Mammary epithelial cell (primary cell): ENCODE measurements at regions of chr1 and their contacts with region 1.

Region 1: DNA sequence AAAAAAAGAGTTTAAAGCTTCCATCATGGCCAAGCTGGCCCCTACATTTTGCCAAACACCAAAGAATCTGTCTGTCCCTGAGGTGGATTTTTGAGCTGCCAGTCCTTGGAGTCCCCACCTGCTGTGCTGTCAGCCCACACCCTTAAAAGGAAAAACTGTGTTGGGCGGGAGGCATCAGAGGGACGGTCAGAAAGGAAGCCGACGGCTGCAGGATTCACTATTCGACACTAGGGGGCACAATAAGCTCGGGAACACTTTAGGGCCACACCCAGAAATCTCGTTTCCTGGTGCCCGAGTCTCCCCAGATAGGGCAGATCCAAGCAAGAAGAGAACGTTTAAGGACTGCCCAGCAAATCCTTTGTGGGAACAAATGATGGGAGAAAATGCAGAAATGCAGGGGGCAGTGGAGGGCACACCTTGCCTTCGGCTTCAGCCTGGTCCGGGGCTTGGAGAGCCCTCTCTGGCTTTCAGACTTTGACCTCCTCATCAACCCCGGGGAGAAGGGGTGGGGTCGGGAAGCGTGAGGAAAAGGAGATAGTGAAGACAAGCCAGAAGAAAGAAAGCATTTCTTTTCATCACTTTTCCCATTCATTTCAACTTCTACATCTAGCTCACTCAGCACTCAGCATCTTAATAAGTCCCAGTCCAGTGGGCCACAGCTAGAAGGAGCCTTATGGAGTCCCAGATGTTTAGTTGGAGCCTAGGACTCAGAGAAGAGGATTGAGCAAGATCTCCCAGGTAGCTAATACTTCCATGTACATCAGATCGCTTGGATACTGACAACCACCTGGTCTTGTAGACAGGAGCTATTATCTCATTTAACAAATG is 5.0 kb upstream of the CTTNBP2NL start:
- DNase-seq: peak; percentile 88
- H3K4me3 ChIP-seq: peak overlapping the region; percentile 38 to 50 (median 41)
- H3K27ac ChIP-seq: peak overlapping the region; percentile 52
- H3K4me1 ChIP-seq: peaks cover 39% of the 10 kb centered on the region
- H3K27me3 ChIP-seq: no peaks in the 10 kb centered on the region
- CTCF ChIP-seq: peak; percentile 90 to 93

Region 2: GRCh38 chr1:112209488-112209887 is 181.5 kb before region 1 on chr1:
- CTCF ChIA-PET with region 1: no interaction called
- dilution Hi-C with region 1: no loop called
- in situ Hi-C with region 1: no loop called
- intact Hi-C with region 1: no loop called
- DNase-seq: peak; percentile 11
- H3K4me3 ChIP-seq: no peak overlapping the region
- H3K27ac ChIP-seq: no peak overlapping the region
- H3K4me1 ChIP-seq: no peaks in the 10 kb centered on the region
- H3K27me3 ChIP-seq: no peaks in the 10 kb centered on the region
- CTCF ChIP-seq: no peak

Region 3: GRCh38 chr1:112298558-112298957 is 92.4 kb before region 1 on chr1:
- CTCF ChIA-PET with region 1: interaction called, 14 read pairs
- dilution Hi-C with region 1: no loop called
- in situ Hi-C with region 1: no loop called
- intact Hi-C with region 1: no loop called
- DNase-seq: peak; percentile 58
- H3K4me3 ChIP-seq: no peak overlapping the region
- H3K27ac ChIP-seq: no peak overlapping the region
- H3K4me1 ChIP-seq: peaks cover 10% of the 10 kb centered on the region
- H3K27me3 ChIP-seq: no peaks in the 10 kb centered on the region
- CTCF ChIP-seq: peak; percentile 86 to 89

Region 4: GRCh38 chr1:112358798-112359408 is 32.1 kb before region 1 on chr1:
- CTCF ChIA-PET with region 1: interaction called, 19 read pairs
- dilution Hi-C with region 1: no loop called
- in situ Hi-C with region 1: no loop called
- intact Hi-C with region 1: no loop called
- DNase-seq: peak; percentile 59
- H3K4me3 ChIP-seq: no peak overlapping the region
- H3K27ac ChIP-seq: no peak overlapping the region
- H3K4me1 ChIP-seq: peaks cover 21% of the 10 kb centered on the region
- H3K27me3 ChIP-seq: no peaks in the 10 kb centered on the region
- CTCF ChIP-seq: peak; percentile 87 to 92

Region 5: GRCh38 chr1:112466078-112466660 is 75.2 kb after region 1 on chr1:
- CTCF ChIA-PET with region 1: interaction called, 7 read pairs
- dilution Hi-C with region 1: no loop called
- in situ Hi-C with region 1: loop called (anchors 5 to 10 kb)
- intact Hi-C with region 1: loop called (anchors 1 kb)
- DNase-seq: peak; percentile 84
- H3K4me3 ChIP-seq: peak overlapping the region in 2 of 3 experiments; percentile 21 to 46
- H3K27ac ChIP-seq: no peak overlapping the region
- H3K4me1 ChIP-seq: peaks cover 37% of the 10 kb centered on the region
- H3K27me3 ChIP-seq: no peaks in the 10 kb centered on the region
- CTCF ChIP-seq: peak; percentile 62 to 85

Region 6: DNA sequence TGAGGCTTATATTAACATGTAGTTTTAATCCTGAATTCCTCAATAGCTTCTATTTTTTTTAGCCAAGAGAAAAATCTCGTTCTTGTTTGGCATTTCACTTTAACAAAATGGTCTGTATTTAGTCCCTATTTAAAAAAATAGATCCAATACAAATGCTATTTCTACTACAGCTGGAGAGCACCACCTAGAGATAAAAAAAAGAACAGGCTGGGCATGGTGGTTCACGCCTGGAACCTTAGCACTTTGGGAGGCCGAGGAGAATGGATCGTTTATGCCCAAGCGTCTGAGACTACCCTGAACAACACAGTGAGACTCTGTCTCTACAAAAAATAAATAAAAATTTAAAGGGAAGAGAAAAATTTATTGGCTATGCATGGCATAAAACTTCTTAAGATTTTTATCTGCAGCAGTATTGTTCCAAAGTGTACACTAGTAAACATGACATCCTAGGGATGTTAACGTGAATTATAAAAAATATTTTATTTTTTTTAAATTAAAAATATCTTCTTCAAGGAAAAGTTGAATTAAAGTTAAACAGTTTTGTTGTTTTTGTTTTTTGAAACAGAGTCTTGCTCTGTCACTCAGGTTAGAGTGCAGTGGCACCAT is 223.6 kb after region 1 on chr1:
- CTCF ChIA-PET with region 1: interaction called, 13 read pairs
- dilution Hi-C with region 1: loop called (anchors 10 kb)
- in situ Hi-C with region 1: loop called (anchors 5 to 10 kb)
- intact Hi-C with region 1: loop called (anchors 1 kb)
- DNase-seq: no peak
- H3K4me3 ChIP-seq: no peak overlapping the region
- H3K27ac ChIP-seq: no peak overlapping the region
- H3K4me1 ChIP-seq: peaks cover 14% of the 10 kb centered on the region
- H3K27me3 ChIP-seq: no peaks in the 10 kb centered on the region
- CTCF ChIP-seq: peak; percentile 53 to 68

Region 7: GRCh38 chr1:112674439-112674985 is 283.5 kb after region 1 on chr1 and contains the start of gene MOV10:
- CTCF ChIA-PET with region 1: interaction called, 3 read pairs
- dilution Hi-C with region 1: no loop called
- in situ Hi-C with region 1: no loop called
- intact Hi-C with region 1: loop called (anchors 1 kb)
- DNase-seq: peak; percentile 76
- H3K4me3 ChIP-seq: peak within 1 kb of the TSS; percentile 69 to 86 (median 72)
- H3K27ac ChIP-seq: peak within 1 kb of the TSS; percentile 78
- H3K4me1 ChIP-seq: peaks cover 22% of the 10 kb centered on the region
- H3K27me3 ChIP-seq: no peaks in the 10 kb centered on the region
- CTCF ChIP-seq: peak in 1 of 2 donors; percentile 13
- total RNA-seq, gene MOV10: 52.2 to 76.0 TPM

Region 8: DNA sequence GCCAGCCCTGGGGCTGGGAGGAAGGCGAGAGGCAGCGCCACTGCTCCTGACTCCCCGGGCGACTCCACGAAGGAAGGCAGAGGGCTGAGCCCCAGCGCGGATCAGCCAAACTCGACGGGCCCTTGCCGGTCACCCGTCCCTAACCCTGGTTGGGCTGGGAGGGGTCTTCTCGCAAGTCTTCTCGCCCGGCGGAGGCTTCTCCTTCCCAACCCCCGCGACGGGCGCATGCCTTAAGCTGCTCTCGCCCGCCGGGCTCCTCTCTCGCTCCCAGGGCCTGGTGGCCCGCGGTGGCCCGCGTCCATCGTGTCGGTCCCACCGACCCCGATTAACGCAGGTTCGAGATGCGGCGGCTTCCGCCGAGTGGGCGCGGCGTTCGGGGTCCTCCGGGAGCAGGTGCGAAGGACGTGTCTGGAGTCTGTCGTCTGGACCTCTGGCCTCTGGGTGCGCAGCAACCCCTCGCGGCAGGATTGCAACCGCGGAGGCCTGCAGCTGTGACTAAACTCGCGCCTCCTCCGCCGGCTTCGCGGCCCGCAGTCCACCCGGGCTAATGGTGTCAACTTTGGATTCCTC is 353.1 kb after region 1 on chr1:
- CTCF ChIA-PET with region 1: interaction called, 11 read pairs
- dilution Hi-C with region 1: no loop called
- in situ Hi-C with region 1: no loop called
- intact Hi-C with region 1: no loop called
- DNase-seq: no peak
- H3K4me3 ChIP-seq: peak overlapping the region in 2 of 3 experiments; percentile 8 to 26
- H3K27ac ChIP-seq: no peak overlapping the region
- H3K4me1 ChIP-seq: peaks cover 10% of the 10 kb centered on the region
- H3K27me3 ChIP-seq: no peaks in the 10 kb centered on the region
- CTCF ChIP-seq: peak; percentile 13 to 68